WTC11 (cell line): ENCODE measurements at regions of chr3 and their contacts with region 1.

Region 1: GRCh38 chr3:11060500-11061251 is 68.1 kb downstream of the SLC6A1 start:
- DNase-seq: peak; percentile 80
- ATAC-seq: peak; percentile 87
- H3K4me3 Mint-ChIP-seq: peak overlapping the region; percentile 60
- H3K27ac Mint-ChIP-seq: no peak overlapping the region
- H3K4me1 Mint-ChIP-seq: no peaks in the 10 kb centered on the region
- H3K27me3 Mint-ChIP-seq: peaks cover 35% of the 10 kb centered on the region
- CTCF ChIP-seq: peak; percentile 82

Region 2: GRCh38 chr3:10945683-10946287 is 114.9 kb before region 1 on chr3:
- CTCF ChIA-PET with region 1: interaction called, 111 read pairs
- POLR2A ChIA-PET with region 1: no interaction called
- DNase-seq: peak; percentile 93
- ATAC-seq: peak; percentile 98
- H3K4me3 Mint-ChIP-seq: no peak overlapping the region
- H3K27ac Mint-ChIP-seq: no peak overlapping the region
- H3K4me1 Mint-ChIP-seq: peaks cover 2% of the 10 kb centered on the region; the same call in 1 of the 2 replicates
- H3K27me3 Mint-ChIP-seq: no peaks in the 10 kb centered on the region; the same call in none of the 2 replicates
- CTCF ChIP-seq: peak; percentile 80

Region 3: DNA sequence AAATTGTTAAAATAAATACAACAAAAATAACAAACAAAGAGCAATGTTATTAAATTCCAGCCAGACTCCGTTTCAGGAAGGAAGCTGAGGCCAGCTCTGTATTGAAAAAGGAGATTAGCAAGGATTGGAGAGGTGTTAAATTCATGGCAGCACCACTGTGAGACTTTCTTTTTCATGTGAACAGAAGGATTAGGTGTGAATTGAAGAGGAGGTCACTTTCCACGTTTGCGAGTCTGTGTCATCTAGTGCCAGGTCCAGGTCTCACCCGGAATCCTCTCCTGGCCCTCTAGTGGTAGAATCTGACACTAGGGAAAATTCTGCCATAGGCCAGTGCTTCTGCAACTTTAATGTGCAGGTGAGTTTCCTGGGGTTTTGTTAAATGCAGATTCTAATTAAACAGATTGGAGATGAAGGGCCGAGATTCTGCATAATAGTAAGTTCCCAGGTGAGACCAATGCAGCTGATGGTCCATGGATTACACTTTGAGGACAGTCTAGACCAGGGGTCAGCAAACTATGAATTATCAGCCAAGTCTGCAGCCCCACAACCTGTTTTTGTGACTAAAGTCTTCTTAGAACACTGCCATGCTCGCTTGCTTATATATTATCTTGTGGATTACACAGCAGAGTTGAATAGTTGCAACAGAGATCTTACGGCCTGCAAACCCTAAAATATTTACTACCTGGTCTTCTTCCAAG is 77.3 kb before region 1 on chr3:
- CTCF ChIA-PET with region 1: interaction called, 14 read pairs
- POLR2A ChIA-PET with region 1: no interaction called
- DNase-seq: peak; percentile 42
- ATAC-seq: peak; percentile 84
- H3K4me3 Mint-ChIP-seq: no peak overlapping the region
- H3K27ac Mint-ChIP-seq: no peak overlapping the region
- H3K4me1 Mint-ChIP-seq: peaks cover 29% of the 10 kb centered on the region
- H3K27me3 Mint-ChIP-seq: peaks cover 26% of the 10 kb centered on the region
- CTCF ChIP-seq: peak; percentile 71

Region 4: GRCh38 chr3:11021611-11022011 is 39.1 kb before region 1 on chr3:
- CTCF ChIA-PET with region 1: interaction called, 22 read pairs
- POLR2A ChIA-PET with region 1: no interaction called
- DNase-seq: peak; percentile 31
- ATAC-seq: peak; percentile 82
- H3K4me3 Mint-ChIP-seq: no peak overlapping the region
- H3K27ac Mint-ChIP-seq: no peak overlapping the region
- H3K4me1 Mint-ChIP-seq: no peaks in the 10 kb centered on the region
- H3K27me3 Mint-ChIP-seq: peaks cover 16% of the 10 kb centered on the region
- CTCF ChIP-seq: no peak

Region 5: DNA sequence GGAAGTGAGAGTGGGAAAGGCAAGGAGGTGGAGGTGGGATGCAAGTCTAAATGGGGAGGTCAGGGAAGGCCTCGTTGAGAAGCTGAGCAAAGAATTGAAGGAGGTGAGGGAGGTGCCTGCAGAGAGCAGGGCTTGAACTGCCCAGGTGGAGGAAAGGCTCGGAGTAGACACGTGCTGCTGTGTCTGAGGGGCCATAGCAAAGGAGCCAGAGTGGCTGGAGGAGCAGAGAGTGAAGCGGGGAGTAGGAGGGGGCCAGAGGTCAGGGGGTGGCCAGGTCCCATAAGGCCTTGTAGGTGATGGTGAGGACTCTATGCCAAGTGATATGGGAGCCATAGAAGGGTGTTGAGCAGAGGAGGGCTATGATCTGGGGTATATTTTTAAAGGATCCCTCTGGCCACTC is 72.2 kb after region 1 on chr3:
- CTCF ChIA-PET with region 1: no interaction called
- POLR2A ChIA-PET with region 1: no interaction called
- DNase-seq: no peak
- ATAC-seq: no peak
- H3K4me3 Mint-ChIP-seq: no peak overlapping the region
- H3K27ac Mint-ChIP-seq: no peak overlapping the region
- H3K4me1 Mint-ChIP-seq: no peaks in the 10 kb centered on the region; the same call in 1 of the 2 replicates
- H3K27me3 Mint-ChIP-seq: peaks cover 2% of the 10 kb centered on the region; the same call in 1 of the 2 replicates
- CTCF ChIP-seq: no peak

Region 6: DNA sequence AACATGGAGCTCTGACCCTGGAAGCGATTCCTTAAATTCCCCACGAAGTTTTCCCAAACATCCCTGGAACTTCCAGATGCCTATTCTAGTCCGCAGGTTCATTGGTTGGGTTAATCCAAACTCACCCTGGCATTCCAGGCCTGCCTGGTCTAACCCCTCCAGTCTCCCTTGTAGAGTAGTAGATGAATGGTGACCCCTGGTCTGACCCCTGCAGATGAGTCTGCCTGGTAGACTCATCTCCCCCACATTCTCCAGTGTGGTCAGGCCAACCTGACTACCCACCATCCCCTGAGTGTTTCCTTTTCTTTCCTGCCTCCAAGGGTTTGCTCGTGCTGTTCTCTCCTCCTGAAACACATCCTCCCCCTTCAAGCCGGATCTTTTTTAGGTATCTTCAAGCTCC is 82.8 kb after region 1 on chr3:
- CTCF ChIA-PET with region 1: no interaction called
- POLR2A ChIA-PET with region 1: no interaction called
- DNase-seq: no peak
- ATAC-seq: no peak
- H3K4me3 Mint-ChIP-seq: no peak overlapping the region
- H3K27ac Mint-ChIP-seq: no peak overlapping the region
- H3K4me1 Mint-ChIP-seq: no peaks in the 10 kb centered on the region
- H3K27me3 Mint-ChIP-seq: peaks cover 11% of the 10 kb centered on the region
- CTCF ChIP-seq: no peak

Region 7: DNA sequence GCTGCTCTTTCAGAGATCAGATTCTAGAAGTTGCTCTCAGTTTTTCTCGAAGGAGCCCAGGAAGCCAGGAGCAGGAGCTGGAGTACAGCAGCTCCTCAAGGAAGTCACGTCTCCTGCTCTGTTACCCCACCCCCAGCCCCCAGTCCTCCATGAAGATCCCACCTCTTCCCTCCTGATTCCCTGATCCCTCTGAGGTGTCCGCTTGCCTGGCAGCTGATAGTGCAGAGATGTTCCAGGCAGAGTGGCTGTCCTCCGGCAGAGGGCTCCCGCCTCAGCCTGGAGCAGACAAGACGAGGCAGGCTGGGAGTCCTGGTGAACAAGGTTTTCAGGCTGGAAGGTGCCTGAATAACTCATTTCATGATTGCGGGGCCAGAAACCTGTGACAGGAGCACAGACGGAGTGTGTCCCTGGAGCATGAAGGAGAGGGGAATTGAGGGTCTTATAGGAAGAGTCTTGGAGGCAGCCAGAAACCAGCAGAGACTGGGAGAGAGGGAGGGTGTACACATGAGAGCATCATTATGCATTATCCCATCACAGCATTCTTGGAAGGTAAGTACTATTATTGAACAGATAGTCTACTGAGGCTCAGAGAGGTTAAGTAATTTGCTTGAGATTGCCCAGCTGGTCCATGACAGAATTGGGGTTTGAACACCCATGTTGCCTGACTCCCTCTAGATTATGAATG is 94.8 kb after region 1 on chr3:
- CTCF ChIA-PET with region 1: interaction called, 52 read pairs
- POLR2A ChIA-PET with region 1: no interaction called
- DNase-seq: peak; percentile 70
- ATAC-seq: peak; percentile 90
- H3K4me3 Mint-ChIP-seq: peak overlapping the region; percentile 83
- H3K27ac Mint-ChIP-seq: no peak overlapping the region
- H3K4me1 Mint-ChIP-seq: peaks cover 12% of the 10 kb centered on the region
- H3K27me3 Mint-ChIP-seq: peaks cover 70% of the 10 kb centered on the region
- CTCF ChIP-seq: no peak

Region 8: DNA sequence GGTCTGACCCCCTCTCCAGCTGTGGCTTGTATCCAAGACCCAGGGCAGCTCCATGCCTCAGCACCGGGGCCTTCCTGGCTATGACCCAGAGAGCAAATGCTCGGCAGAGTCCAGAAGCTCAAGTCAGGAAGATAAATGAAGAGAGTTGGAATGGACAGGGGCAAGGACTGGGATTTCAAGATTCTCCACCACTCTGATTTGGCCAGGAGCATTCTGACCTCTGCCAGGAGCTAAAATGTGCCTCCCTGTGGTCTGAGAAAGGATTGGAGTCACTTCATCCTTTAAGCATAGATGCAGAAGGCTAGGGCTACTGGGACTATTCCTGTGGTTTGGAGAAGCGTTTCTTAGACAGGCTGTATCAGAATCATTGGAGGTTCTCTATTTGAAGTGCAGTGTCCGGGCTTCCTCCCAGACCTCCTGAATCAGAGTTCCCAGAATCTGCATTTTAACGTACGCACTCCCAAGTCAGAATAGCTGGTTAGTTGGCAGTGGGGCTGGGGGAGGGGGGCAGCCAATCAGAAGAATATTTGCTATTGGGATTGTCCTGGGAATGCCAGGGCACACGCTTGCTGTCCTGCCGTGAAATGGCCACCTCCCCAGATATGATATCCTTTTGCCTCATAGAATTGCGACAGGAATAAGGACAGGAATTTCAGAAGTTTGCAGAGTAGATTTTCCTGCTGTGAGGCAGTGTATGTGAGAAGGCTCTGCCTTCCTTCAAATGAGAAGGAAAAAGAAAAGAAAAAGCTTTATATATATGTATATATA is 151.0 kb after region 1 on chr3:
- CTCF ChIA-PET with region 1: interaction called, 39 read pairs
- POLR2A ChIA-PET with region 1: no interaction called
- DNase-seq: no peak
- ATAC-seq: peak; percentile 51
- H3K4me3 Mint-ChIP-seq: no peak overlapping the region
- H3K27ac Mint-ChIP-seq: no peak overlapping the region
- H3K4me1 Mint-ChIP-seq: no peaks in the 10 kb centered on the region
- H3K27me3 Mint-ChIP-seq: no peaks in the 10 kb centered on the region; the same call in 1 of the 2 replicates
- CTCF ChIP-seq: no peak